Common myeloid progenitor, CD34-positive (primary cell): ENCODE measurements at regions of chr5 and their contacts with region 1.

Region 1: DNA sequence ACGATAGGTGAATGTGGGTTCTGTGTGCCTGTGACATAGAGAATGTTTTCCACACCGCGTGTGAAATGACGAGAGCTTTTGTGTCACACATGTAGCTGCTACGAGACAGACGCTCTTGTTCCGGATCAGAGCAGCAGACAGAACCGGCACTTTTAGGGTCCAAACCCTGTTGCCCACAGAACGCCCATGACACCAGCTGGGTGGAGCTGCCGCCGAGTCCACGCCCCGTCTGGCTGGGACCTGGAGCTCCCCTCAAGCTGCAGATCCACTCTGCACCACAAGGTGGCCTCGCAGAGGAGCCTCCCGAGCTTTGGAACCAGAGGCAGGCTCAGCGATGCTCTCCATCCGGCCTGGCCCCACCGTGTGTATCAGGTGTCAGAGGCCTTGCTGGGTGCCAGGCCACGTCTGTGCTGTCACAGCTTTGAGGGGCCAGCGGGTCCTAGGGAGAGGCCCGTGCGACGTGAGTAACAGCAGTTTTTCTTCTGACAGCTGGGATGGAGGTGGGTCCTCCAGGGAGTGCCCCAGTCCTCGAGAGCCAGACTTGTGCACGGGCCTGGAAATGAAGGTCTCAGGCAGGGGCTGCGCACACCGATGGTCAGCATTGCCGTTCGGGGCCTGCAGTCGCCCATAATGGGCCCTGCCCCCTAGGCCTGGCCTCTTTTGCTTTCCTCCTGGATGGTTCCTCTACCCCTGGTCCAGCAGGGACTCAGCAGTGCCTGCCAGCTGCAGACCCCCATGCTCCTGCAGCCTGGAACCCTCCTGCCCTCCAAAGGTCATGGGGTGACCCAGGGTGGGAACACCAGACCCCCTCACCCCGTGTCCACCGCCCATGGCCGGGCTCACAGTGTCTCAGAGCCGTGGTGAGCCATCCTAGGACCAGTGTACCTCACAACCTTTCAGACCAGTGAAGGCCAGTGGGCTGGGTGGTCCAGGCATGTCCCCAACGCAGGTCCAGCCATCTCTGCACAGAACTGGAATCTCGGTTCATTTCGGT is 2.5 kb upstream of the LRRC14B start:
- DNase-seq: peak; percentile 79 to 88 (median 84)
- H3K4me3 ChIP-seq: peak overlapping the region in 1 of 7 experiments; percentile 58
- H3K27ac ChIP-seq: no peak overlapping the region
- H3K4me1 ChIP-seq: peaks cover 0 to 29% (median 17%) of the 10 kb centered on the region in 4 experiments
- H3K27me3 ChIP-seq: peaks cover 0 to 4% (median 2%) of the 10 kb centered on the region in 5 experiments

Region 2: DNA sequence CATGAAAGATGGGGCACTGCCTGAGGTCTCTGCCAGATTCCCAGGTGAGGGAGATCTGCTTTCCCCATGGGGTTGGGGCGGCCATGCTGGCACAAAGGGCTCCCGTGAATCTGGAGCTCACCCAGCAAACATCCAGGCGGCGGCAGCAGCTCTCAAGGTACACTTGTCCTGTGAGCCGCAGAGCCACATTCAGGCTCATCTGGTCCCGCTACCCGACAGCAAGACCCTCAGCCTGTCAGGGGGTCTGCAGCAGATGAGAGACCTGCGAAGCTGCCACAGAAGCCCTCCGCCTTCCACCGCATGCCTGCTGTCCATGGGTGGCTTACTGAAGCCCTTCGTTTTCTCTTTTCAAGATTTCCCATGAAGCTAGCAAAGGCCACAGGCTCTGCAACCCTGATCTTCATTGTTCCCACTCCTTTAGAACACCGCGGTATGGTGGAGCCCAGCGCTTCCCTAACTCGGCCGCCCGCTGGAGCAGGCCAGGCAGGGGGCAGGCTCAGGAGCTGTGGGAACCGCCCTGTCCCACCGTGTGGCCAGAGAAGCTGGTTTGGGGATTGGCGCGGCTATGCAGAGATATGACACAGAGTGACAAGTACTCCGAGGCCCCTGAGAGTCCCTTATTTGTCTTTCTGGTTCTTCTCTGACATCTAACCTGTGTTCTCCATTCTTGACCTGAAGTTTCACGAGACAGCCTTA is 11.3 kb after region 1 on chr5:
- CTCF ChIA-PET with region 1: interaction called, 11 read pairs
- POLR2A ChIA-PET with region 1: interaction called, 3 read pairs
- DNase-seq: no peak
- H3K4me3 ChIP-seq: no peak overlapping the region
- H3K27ac ChIP-seq: no peak overlapping the region
- H3K4me1 ChIP-seq: no peaks in the 10 kb centered on the region
- H3K27me3 ChIP-seq: no peaks in the 10 kb centered on the region

Region 3: DNA sequence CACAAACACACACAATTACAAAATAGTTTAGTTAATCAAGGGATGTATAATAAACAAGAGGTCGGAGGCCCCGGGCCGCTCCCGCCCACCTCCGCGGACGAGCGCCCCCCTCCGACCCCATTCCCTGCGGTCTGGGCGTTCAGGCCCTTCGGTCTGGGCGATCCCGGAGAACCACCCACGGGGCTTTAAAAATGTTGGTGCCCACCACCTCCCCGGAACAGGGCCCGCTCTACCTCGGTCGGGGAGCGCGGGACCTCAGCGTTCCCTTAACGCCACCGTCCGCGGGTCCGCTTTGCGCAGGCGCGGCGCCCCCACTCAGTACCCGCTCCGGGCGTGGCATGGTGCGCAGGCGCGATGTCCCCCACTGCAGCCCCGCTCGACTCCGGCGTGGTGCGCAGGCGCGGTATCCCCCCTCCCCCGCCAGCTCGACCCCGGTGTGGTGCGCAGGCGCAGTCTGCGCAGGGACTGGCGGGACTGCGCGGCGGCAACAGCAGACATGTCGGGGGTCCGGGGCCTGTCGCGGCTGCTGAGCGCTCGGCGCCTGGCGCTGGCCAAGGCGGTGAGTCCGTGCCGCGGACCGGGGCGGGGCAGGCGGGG is 29.2 kb after region 1 on chr5 and contains the starts of genes CCDC127 and SDHA:
- CTCF ChIA-PET with region 1: interaction called, 16 read pairs
- POLR2A ChIA-PET with region 1: interaction called, 3 read pairs
- DNase-seq: peak; percentile 92 to 96 (median 94)
- H3K4me3 ChIP-seq: peak within 1 kb of the TSS; percentile 75 to 96 (median 93)
- H3K27ac ChIP-seq: peak within 1 kb of the TSS; percentile 70 to 87
- H3K4me1 ChIP-seq: peaks cover 0 to 36% (median 14%) of the 10 kb centered on the region in 4 experiments
- H3K27me3 ChIP-seq: no peaks in the 10 kb centered on the region

Region 4: DNA sequence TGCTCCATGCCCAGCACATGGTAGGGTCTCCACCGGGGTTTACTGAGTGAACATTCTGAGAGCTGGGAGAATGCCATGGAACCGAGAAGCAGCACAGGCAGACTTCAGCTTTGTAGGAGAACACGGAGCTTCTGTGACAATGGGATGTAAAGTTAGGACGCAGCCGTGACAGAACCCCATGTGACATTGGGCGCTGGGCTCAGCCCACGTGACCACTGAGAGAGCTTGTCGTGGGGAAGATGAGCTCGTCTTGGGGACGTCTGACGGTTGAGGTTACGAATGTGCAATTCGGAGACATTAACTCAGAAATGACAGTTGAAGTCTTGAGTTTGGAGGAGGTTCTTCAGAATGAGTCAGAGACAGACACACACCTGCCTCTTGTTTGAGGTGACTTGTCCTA is 42.9 kb after region 1 on chr5:
- CTCF ChIA-PET with region 1: no interaction called
- POLR2A ChIA-PET with region 1: no interaction called
- DNase-seq: no peak
- H3K4me3 ChIP-seq: no peak overlapping the region
- H3K27ac ChIP-seq: no peak overlapping the region
- H3K4me1 ChIP-seq: no peaks in the 10 kb centered on the region
- H3K27me3 ChIP-seq: no peaks in the 10 kb centered on the region

Region 5: GRCh38 chr5:360257-361027 is 171.7 kb after region 1 on chr5:
- CTCF ChIA-PET with region 1: no interaction called
- POLR2A ChIA-PET with region 1: no interaction called
- DNase-seq: no peak
- H3K4me3 ChIP-seq: no peak overlapping the region
- H3K27ac ChIP-seq: no peak overlapping the region
- H3K4me1 ChIP-seq: peaks cover 0 to 6% (median 0%) of the 10 kb centered on the region in 4 experiments
- H3K27me3 ChIP-seq: no peaks in the 10 kb centered on the region

Region 6: DNA sequence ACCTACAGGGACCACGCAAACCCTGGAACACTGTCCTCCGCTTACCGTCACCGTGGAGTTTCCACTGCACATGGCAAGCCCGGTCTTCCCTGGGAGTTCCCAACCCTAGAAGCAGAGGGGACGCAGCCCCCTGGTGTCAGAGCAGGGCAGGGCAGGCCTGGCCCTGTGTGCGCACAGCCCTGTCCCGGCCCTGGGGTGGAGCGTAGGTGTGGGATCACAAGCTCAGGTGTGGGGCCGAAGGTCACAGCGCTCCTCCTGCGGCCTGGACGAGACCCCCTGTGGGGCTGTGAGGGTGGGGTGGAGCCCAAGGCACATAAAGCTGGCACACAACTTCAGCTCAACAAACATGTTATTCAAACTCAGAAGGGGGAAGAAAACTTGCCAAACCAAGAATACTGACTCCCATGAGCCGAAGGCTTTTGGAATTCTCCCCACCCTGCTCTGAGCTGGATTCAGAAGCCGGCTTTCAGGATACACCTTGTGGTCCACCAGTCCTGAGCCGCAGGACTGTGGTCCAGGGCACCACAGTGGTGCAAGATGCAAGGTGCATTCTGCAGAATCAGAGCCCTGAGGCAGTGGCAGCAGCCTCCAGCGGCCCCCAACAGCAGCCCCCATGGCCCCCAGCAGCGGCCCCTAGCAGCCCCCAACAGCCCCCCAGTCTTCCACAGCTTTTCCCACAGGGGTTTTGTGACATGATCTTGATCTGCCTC is 242.4 kb after region 1 on chr5:
- CTCF ChIA-PET with region 1: interaction called, 13 read pairs
- POLR2A ChIA-PET with region 1: no interaction called
- DNase-seq: peak; percentile 43 to 57 (median 43)
- H3K4me3 ChIP-seq: no peak overlapping the region
- H3K27ac ChIP-seq: no peak overlapping the region
- H3K4me1 ChIP-seq: peaks cover 0 to 1% (median 0%) of the 10 kb centered on the region in 4 experiments
- H3K27me3 ChIP-seq: no peaks in the 10 kb centered on the region

Region 7: GRCh38 chr5:505951-506525 is 317.3 kb after region 1 on chr5:
- CTCF ChIA-PET with region 1: no interaction called
- POLR2A ChIA-PET with region 1: no interaction called
- DNase-seq: no peak
- H3K4me3 ChIP-seq: no peak overlapping the region
- H3K27ac ChIP-seq: no peak overlapping the region
- H3K4me1 ChIP-seq: peaks cover 0 to 12% (median 10%) of the 10 kb centered on the region in 4 experiments
- H3K27me3 ChIP-seq: peaks cover 0 to 32% (median 3%) of the 10 kb centered on the region in 5 experiments